Astrocyte of the cerebellum (primary cell): ENCODE measurements at regions of chr4 and their contacts with region 1.

Region 1: DNA sequence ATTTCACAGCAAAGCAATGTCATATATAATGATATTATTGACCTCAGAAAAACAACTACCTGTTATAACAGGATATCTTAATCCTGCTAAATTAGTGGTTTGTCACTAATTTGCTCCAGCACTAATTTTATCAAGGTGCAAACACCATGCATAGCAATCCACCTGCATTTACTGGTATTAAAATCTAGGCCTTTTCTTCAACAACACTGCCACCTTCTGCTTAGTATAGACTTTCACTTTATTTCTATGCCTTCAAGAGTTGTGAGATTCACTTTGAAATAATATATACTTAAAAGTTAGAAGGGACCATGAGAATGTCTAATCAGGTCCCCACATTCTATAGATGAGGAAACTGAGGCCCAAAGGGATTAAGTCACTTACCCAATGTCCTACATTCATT is 82.1 kb upstream of the IQCM start:
- DNase-seq: peak; percentile 16
- H3K4me3 ChIP-seq: no peak overlapping the region
- CTCF ChIP-seq: peak; percentile 10

Region 2: GRCh38 chr4:149370785-149371420 is 526.9 kb before region 1 on chr4:
- in situ Hi-C with region 1: loop called (anchors 25 kb)
- DNase-seq: peak; percentile 47
- H3K4me3 ChIP-seq: no peak overlapping the region
- CTCF ChIP-seq: peak; percentile 47

Region 3: DNA sequence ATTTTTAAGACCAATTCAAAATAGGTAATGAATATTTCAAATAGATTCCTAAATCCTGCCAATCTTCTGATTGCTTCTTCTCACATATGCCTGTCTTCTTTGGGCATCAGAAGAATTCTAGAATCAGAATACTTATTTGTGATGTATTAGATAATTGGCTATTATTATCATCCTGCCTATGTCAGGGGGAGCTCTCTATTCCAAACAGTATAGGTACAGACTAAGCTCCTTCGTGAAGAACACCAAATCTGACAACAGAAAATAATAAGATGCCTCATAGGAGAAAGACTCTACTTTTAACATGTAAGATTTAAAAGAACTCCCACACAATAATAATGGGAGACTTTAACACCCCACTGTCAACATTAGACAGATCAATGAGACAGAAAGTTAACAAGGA is 82.0 kb before region 1 on chr4 and contains the start of gene IQCM:
- in situ Hi-C with region 1: no loop called
- DNase-seq: no peak
- H3K4me3 ChIP-seq: no peak within 1 kb of the TSS
- CTCF ChIP-seq: no peak